ENCODE measurements at regions of chr20 and their contacts with region 1.

Region 1: GRCh38 chr20:38893565-38894090 is 32.6 kb upstream of the FAM83D start:
- DNase-seq: peak; percentile 59
- H3K4me3 Mint-ChIP-seq: peak overlapping the region; percentile 57
- H3K27ac Mint-ChIP-seq: no peak overlapping the region
- H3K4me1 Mint-ChIP-seq: peaks cover 10% of the 10 kb centered on the region
- H3K27me3 Mint-ChIP-seq: peaks cover 14% of the 10 kb centered on the region
- CTCF ChIP-seq: peak; percentile 92

Region 2: DNA sequence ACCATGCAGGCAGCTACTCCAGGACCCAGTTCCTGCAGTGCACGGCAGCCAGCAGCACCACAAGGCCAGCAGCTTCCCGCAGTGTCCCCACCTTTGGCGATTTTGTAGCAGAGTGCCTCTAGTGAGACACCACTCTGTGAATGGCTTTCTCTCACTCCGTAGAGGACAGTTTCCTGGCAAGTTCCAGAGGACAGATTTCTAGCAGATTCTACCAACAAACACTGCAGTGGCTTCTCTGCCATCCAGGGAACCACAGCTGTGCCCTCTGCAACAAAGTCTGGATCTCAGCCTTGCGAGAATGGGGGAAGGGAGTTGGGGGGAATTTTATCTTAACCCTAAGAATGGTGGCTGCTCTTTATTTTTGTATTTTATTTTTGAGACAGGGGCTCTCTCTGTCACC is 487.2 kb before region 1 on chr20:
- CTCF ChIA-PET with region 1: no interaction called
- POLR2A ChIA-PET with region 1: no interaction called
- intact Hi-C with region 1: no loop called
- DNase-seq: no peak
- H3K4me3 Mint-ChIP-seq: no peak overlapping the region
- H3K27ac Mint-ChIP-seq: no peak overlapping the region
- H3K4me1 Mint-ChIP-seq: no peaks in the 10 kb centered on the region
- H3K27me3 Mint-ChIP-seq: no peaks in the 10 kb centered on the region
- CTCF ChIP-seq: no peak

Region 3: DNA sequence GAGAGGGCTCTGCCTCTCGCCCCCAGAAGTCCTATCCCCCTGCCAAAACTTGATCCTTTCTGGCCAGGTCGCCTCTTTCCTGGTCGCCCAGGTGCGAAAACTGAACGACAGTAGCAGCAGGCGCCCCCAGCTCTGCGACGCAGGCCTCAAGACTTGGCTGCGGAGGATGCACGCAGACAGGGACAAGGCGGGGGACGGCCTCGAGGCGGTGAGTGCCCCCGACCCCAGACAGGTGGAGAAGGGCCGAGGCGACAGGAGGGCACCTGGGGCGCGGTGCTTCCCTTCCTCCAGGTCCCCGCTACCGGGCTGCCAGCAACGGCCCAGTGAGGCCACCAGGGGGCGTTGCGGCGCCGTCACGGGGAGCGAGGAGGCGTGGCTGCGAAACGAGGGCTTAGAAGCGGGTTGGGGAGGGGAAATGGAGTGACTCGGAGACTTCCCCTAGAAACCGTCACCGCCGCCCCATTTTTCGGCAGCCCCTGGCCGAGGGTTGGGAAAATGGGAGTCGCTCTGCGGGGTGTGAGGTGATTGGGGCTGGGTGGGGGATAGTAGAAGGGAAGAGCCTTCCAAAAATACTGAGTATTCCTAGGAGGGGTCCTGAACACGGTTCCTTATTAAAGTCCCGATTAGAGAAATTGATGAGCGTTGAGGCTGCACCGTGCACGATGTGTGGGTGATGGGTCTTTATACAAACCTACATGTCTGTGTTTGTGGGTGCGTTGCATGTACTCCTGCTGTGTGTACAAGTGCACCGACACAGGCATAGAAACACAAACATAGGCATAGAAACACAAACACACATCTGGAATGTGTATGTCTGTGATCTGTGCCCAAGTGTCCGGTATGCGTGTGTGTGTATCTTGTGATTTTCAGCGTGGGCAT is 247.4 kb before region 1 on chr20:
- CTCF ChIA-PET with region 1: interaction called, 131 read pairs
- POLR2A ChIA-PET with region 1: no interaction called
- intact Hi-C with region 1: loop called (anchors 1 kb)
- DNase-seq: peak; percentile 74
- H3K4me3 Mint-ChIP-seq: peak overlapping the region; percentile 60
- H3K27ac Mint-ChIP-seq: no peak overlapping the region
- H3K4me1 Mint-ChIP-seq: peaks cover 9% of the 10 kb centered on the region
- H3K27me3 Mint-ChIP-seq: peaks cover 42% of the 10 kb centered on the region
- CTCF ChIP-seq: peak; percentile 96

Region 4: DNA sequence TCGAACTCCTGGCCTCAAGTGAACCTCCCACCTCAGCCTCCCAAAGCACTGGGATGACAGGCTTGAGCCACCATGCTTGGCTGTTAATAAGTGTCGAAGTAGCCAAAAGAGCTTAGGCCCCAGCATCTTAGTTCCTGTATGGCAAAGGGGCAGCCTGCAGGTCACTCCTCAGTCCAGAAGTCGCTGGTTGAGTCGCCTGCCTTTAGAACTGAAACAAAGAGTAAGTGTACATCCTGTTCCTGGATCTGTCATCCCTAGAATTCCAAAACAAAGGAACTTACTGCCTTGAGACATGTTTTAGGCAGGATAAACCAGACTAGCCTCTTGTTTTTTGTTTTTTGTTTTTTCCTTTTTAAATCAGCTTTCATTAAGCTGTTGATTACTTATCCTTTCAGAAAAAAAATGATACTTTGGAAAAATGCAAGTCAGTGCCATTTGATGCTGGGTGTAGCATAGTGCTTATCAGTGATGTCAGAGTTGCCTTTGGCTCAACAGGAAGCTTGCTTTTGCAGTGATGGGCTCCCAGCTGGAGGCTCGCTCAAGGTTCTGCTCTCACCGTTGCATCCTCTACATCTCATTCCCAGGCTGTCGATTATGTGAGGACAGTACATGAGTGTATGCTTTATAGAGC is 136.4 kb before region 1 on chr20:
- CTCF ChIA-PET with region 1: interaction called, 131 read pairs
- POLR2A ChIA-PET with region 1: interaction called, 4 read pairs
- intact Hi-C with region 1: no loop called
- DNase-seq: no peak
- H3K4me3 Mint-ChIP-seq: no peak overlapping the region
- H3K27ac Mint-ChIP-seq: no peak overlapping the region
- H3K4me1 Mint-ChIP-seq: no peaks in the 10 kb centered on the region
- H3K27me3 Mint-ChIP-seq: no peaks in the 10 kb centered on the region
- CTCF ChIP-seq: no peak

Region 5: DNA sequence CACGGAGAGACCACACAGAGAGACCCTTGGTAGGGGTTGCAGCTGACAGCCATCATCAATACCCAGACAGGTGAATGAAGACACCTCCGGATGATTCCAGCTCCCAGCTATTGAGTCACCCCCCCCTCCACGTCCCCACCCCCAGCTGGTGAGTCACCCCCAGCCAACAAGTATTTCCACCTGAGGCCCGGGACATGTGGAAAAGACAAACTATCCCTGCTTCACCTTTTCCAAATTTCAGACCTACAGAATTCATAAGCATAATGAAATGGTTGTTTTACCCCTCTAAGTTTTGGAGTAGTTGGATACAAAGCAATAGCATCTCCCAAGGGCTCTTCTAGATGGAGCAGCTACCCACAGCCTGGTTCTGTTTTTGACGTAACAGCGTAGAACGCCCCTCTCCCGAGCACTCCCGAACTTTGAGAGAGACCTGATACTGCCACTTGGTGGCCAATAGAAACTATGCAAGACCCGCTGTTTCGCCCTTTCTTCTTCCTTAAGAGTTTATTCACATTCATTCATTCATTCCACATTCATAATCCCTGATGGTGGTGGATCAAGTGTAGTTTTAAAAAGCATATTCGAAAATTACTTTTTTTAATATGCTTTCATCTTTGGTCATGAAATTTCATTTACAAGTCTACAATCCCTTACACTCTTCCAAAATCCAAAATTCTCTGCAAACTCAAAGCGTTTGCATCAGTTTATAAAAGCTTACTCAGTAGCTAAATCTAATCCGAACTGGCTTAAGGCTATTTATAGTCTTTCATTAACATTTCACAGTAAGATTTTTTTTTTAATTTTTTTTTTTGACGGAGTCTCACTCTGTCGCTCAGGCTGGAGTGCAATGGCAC is 103.2 kb before region 1 on chr20:
- CTCF ChIA-PET with region 1: interaction called, 12 read pairs
- POLR2A ChIA-PET with region 1: no interaction called
- intact Hi-C with region 1: no loop called
- DNase-seq: peak; percentile 47
- H3K4me3 Mint-ChIP-seq: no peak overlapping the region
- H3K27ac Mint-ChIP-seq: peak overlapping the region; percentile 76
- H3K4me1 Mint-ChIP-seq: peaks cover 6% of the 10 kb centered on the region
- H3K27me3 Mint-ChIP-seq: no peaks in the 10 kb centered on the region
- CTCF ChIP-seq: no peak

Region 6: GRCh38 chr20:38883081-38883980 is 10.3 kb before region 1 on chr20:
- CTCF ChIA-PET with region 1: interaction called, 112 read pairs
- POLR2A ChIA-PET with region 1: interaction called, 3 read pairs
- intact Hi-C with region 1: no loop called
- DNase-seq: peak; percentile 43
- H3K4me3 Mint-ChIP-seq: no peak overlapping the region
- H3K27ac Mint-ChIP-seq: no peak overlapping the region
- H3K4me1 Mint-ChIP-seq: peaks cover 10% of the 10 kb centered on the region
- H3K27me3 Mint-ChIP-seq: no peaks in the 10 kb centered on the region
- CTCF ChIP-seq: no peak

Region 7: GRCh38 chr20:38919683-38920082 is 26.1 kb after region 1 on chr20:
- CTCF ChIA-PET with region 1: interaction called, 32 read pairs
- POLR2A ChIA-PET with region 1: no interaction called
- intact Hi-C with region 1: no loop called
- DNase-seq: no peak
- H3K4me3 Mint-ChIP-seq: no peak overlapping the region
- H3K27ac Mint-ChIP-seq: no peak overlapping the region
- H3K4me1 Mint-ChIP-seq: no peaks in the 10 kb centered on the region
- H3K27me3 Mint-ChIP-seq: peaks cover 37% of the 10 kb centered on the region
- CTCF ChIP-seq: no peak